PC-3 (cell line): ENCODE measurements at regions of chr7 and their contacts with region 1.

Region 1: DNA sequence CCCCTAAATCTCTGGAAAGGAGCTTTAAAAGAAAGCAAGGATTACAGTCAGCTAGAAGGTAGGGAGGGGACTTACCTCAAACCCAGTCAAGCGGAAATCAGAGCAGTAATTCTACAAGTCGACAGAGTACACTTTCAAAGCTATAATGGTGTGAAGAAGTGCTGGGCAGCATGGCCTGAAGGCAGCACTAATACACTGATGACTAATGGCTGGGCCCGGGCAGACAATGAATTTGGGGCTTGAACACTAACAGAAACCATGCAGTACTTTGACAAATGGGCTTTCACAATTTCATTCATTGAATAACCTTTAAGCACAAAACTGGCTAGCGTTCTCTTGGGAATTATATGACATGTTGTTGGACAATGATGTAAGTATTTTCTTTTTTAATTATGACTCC is 4.7 kb downstream of the GLI3 start:
- DNase-seq: peak; percentile 67
- ATAC-seq: peak; percentile 9; the same call in 1 of the 2 replicates
- H3K4me3 ChIP-seq: peak overlapping the region; percentile 9; the same call in 1 of the 2 replicates
- H3K27ac ChIP-seq: no peak overlapping the region
- H3K4me1 ChIP-seq: peaks cover 43% of the 10 kb centered on the region
- H3K27me3 ChIP-seq: no peaks in the 10 kb centered on the region
- CTCF ChIP-seq: no peak

Region 2: DNA sequence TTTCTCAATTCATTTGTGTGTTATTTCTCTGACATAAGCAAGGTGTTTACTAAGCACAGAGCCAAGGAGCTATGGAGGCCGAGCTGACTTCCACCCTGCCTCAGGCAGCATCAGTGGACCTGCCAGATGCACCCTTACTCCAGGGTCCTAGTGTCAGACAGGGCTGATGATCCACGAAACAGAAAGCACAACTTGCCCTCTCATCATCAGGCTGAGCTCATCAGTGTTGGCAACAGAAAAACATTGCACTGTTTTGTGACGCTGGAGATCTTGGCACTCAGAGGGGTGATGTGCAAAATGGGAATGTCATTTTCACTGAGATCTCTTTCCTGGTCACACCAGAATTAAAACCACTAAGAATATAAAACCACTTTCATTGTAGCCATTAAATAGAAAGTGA is 197.1 kb before region 1 on chr7:
- CTCF ChIA-PET with region 1: no interaction called
- POLR2A ChIA-PET with region 1: no interaction called
- intact Hi-C with region 1: no loop called
- DNase-seq: no peak
- ATAC-seq: no peak
- H3K4me3 ChIP-seq: no peak overlapping the region
- H3K27ac ChIP-seq: no peak overlapping the region
- H3K4me1 ChIP-seq: no peaks in the 10 kb centered on the region
- H3K27me3 ChIP-seq: no peaks in the 10 kb centered on the region
- CTCF ChIP-seq: no peak

Region 3: GRCh38 chr7:42151309-42151708 is 81.0 kb before region 1 on chr7:
- CTCF ChIA-PET with region 1: no interaction called
- POLR2A ChIA-PET with region 1: no interaction called
- intact Hi-C with region 1: no loop called
- DNase-seq: no peak
- ATAC-seq: no peak
- H3K4me3 ChIP-seq: no peak overlapping the region
- H3K27ac ChIP-seq: no peak overlapping the region
- H3K4me1 ChIP-seq: no peaks in the 10 kb centered on the region; the same call in 1 of the 2 replicates
- H3K27me3 ChIP-seq: no peaks in the 10 kb centered on the region
- CTCF ChIP-seq: no peak

Region 4: GRCh38 chr7:42174391-42174912 is 57.8 kb before region 1 on chr7:
- CTCF ChIA-PET with region 1: interaction called, 3 read pairs
- POLR2A ChIA-PET with region 1: interaction called, 6 read pairs
- intact Hi-C with region 1: loop called (anchors 5 kb)
- DNase-seq: peak; percentile 84
- ATAC-seq: no peak
- H3K4me3 ChIP-seq: no peak overlapping the region
- H3K27ac ChIP-seq: peak overlapping the region; percentile 80
- H3K4me1 ChIP-seq: peaks cover 49% of the 10 kb centered on the region
- H3K27me3 ChIP-seq: no peaks in the 10 kb centered on the region
- CTCF ChIP-seq: no peak

Region 5: DNA sequence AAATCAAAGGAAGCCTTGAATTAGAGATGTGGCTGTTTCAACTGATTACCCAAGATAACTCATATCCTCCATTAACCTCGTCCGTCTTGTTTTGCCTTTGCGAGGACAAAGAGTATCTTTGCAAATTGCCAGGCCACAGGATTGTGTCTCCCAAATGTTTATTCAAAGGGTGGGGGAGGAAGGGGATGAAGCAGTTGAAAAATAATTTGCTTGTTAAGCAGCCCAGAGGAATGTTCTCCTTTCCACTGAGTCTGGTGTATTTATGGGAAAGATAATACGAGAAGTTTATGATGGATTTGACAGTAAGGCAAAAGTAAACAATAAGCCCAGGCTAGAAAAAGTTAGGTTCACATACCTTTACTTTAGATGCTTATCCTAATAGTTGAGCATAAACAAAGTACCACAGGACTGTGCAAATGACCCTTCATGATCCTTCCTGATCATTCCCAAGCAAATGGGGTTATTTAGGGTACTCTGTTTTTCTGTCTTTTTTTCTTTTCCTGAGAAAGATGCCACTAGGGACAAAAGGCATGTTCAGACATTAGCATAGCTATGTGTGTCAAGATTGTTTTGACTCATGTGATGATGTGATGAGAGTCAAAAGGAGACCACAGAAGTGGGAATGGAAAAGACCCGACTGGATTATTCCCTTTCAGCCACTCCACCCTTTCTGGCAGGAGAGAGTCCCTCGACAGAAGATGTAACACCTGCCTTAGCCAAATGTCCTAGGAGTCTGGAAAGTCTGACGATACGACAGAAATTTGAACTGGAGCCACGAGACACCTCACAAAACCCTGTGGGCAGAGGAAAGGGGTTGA is 247.8 kb after region 1 on chr7:
- CTCF ChIA-PET with region 1: no interaction called
- POLR2A ChIA-PET with region 1: no interaction called
- intact Hi-C with region 1: loop called (anchors 2 kb)
- DNase-seq: peak; percentile 89
- ATAC-seq: peak; percentile 97
- H3K4me3 ChIP-seq: no peak overlapping the region
- H3K27ac ChIP-seq: peak overlapping the region; percentile 80
- H3K4me1 ChIP-seq: peaks cover 23% of the 10 kb centered on the region
- H3K27me3 ChIP-seq: no peaks in the 10 kb centered on the region
- CTCF ChIP-seq: no peak